Dendritic cell treated with granulocyte-macrophage colony-stimulating factor and Interleukin-4, amounts not matched to agents 40 ng/mL and 50 ng/mL, for 4 days (primary cell): ENCODE measurements at regions of chr9 and their contacts with region 1.

Region 1: DNA sequence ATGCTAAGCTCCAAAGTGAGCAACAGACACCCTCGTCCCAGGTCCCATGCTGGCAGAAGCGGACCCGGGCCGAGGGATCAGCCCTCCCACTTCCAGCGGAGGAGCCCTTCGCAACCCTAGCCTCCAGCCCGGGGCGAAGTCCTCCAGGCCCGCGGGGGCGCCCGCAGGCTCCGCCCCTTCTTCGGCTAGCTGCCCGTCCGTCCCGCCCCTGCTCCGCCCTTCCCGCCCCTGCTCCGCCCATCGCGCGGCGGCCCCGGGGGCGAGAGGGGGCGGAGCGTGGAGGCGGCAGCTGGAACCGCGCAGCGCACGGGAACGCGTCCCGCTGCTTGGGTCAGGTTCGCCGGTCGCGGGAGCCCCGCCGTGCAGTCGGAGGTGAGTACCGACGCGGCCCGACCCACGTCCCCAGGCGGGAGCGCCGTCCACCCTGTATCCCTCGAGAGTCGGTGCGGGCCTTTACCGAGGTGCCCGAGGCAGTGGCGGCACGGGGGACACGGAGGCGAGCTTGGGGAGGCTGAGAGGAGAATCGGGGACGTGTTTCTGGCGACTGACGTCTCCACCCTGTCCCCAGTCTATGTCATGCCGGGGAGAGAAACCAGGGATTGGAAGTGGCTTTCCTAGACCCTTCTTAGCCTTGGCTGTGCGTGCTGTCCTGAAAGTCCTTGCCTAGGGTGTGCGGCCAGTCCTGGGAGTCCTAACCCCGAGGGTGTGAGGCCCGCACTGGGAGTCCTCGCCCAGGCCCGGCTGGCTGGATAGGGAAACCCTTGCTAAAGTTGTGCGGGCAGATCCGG is at the start of gene ACO1:
- H3K4me3 Mint-ChIP-seq: peak within 1 kb of the TSS; percentile 87
- H3K27ac Mint-ChIP-seq: peak within 1 kb of the TSS; percentile 80
- H3K4me1 Mint-ChIP-seq: peaks cover 26% of the 10 kb centered on the region
- H3K27me3 Mint-ChIP-seq: peaks cover 26% of the 10 kb centered on the region

Region 2: GRCh38 chr9:32550562-32551433 is 166.2 kb after region 1 on chr9:
- intact Hi-C with region 1: loop called (anchors 1 kb)
- H3K4me3 Mint-ChIP-seq: peak overlapping the region; percentile 83
- H3K27ac Mint-ChIP-seq: peak overlapping the region; percentile 94
- H3K4me1 Mint-ChIP-seq: peaks cover 32% of the 10 kb centered on the region
- H3K27me3 Mint-ChIP-seq: no peaks in the 10 kb centered on the region

Region 3: GRCh38 chr9:32571969-32572899 is 187.7 kb after region 1 on chr9:
- intact Hi-C with region 1: loop called (anchors 2 kb)
- H3K4me3 Mint-ChIP-seq: peak overlapping the region; percentile 97
- H3K27ac Mint-ChIP-seq: peak overlapping the region; percentile 92
- H3K4me1 Mint-ChIP-seq: peaks cover 19% of the 10 kb centered on the region
- H3K27me3 Mint-ChIP-seq: peaks cover 2% of the 10 kb centered on the region